GM12878 (cell line): ENCODE measurements at regions of chr1 and their contacts with region 1.

Region 1: GRCh38 chr1:41678111-41678878 is 193.8 kb upstream of the EDN2 start:
- DNase-seq: no peak
- ATAC-seq: peak; percentile 82
- H3K4me3 ChIP-seq: no peak overlapping the region
- H3K27ac ChIP-seq: peak overlapping the region; percentile 40; the same call in 1 of the 2 replicates
- H3K4me1 ChIP-seq: peaks cover 43% of the 10 kb centered on the region
- H3K27me3 ChIP-seq: no peaks in the 10 kb centered on the region
- CTCF ChIP-seq: no peak
- EP300 ChIP-seq: no peak
- POLR2A ChIP-seq: 0 out of 2 replicates have a peak, but pooled peaks have one; percentile 24
- RAD21 ChIP-seq: no peak

Region 2: DNA sequence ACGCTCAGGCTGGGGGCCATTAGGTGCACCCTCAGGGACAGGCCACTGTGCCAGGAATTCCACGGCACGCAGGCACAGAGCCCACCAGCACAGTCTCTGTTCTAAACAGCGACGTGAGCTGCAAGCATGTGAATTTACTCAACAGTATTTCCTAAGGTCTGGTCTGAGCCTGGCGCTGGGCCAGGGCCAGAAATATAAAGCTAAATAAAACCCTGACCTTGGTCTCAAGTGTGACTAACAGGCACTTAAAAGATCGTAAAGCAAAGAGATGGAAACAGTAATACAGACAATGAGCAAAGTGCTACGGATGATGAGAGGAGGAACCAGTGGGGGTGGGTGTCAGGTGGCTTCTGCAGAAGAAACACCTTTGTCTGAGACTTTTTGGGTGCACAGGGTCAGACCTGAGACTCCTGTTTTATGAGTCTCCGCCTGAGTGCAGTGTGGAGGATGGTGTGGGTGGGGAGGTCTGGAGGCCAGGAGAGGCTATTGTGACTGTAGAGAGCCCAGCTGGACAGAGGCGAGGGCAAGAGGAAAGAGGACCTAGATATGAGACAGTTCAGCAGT is 140.4 kb before region 1 on chr1:
- CTCF ChIA-PET with region 1: no interaction called
- POLR2A ChIA-PET with region 1: no interaction called
- RAD21 ChIA-PET with region 1: no interaction called
- SMC1A ChIA-PET with region 1: no interaction called
- in situ Hi-C with region 1: no loop called
- intact Hi-C with region 1: no loop called
- DNase-seq: no peak
- ATAC-seq: no peak
- H3K4me3 ChIP-seq: no peak overlapping the region
- H3K27ac ChIP-seq: no peak overlapping the region
- H3K4me1 ChIP-seq: peaks cover 3% of the 10 kb centered on the region; the same call in 1 of the 2 replicates
- H3K27me3 ChIP-seq: no peaks in the 10 kb centered on the region
- CTCF ChIP-seq: no peak
- EP300 ChIP-seq: no peak
- POLR2A ChIP-seq: no peak
- RAD21 ChIP-seq: no peak

Region 3: DNA sequence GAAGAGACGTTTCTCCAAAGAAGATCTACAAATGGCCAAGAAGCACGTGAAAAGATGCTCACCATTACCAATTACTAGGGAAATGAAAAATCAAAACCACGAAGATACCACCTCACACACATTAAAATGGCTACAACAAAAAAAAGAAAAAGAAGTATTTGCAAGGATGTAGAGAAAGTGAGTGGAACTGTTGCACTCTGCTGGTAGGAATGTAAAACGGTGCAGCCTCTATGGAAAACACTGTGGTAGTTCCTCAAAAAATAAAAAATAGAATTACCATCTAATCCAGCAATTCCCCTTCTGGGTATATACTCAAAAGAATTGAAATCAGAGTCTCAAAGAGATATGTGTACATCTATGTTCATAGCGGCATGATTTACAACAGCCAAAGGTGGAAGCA is 78.4 kb before region 1 on chr1:
- CTCF ChIA-PET with region 1: no interaction called
- POLR2A ChIA-PET with region 1: no interaction called
- RAD21 ChIA-PET with region 1: no interaction called
- SMC1A ChIA-PET with region 1: no interaction called
- in situ Hi-C with region 1: no loop called
- intact Hi-C with region 1: no loop called
- DNase-seq: no peak
- ATAC-seq: no peak
- H3K4me3 ChIP-seq: no peak overlapping the region
- H3K27ac ChIP-seq: no peak overlapping the region
- H3K4me1 ChIP-seq: no peaks in the 10 kb centered on the region
- H3K27me3 ChIP-seq: no peaks in the 10 kb centered on the region
- CTCF ChIP-seq: no peak
- EP300 ChIP-seq: no peak
- POLR2A ChIP-seq: no peak
- RAD21 ChIP-seq: no peak

Region 4: DNA sequence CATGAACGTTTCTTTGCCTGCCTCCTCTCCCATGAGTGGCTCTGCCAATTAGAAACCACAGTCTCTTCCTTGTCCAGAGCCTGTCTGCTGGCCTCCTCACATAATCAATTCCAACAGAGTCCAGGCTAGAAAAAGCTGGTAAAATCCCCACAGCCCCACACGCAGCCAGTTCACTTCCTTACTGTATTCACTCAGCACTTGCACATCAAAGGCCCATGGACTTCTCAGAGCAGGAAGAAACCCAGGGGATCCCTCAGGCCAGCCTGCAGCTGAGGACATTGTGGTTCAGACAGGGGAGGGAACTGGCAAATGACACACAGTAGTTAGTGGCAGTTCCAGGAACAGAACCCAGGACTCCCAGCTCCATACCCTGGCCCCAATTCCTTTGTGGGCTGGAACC is 22.2 kb before region 1 on chr1:
- CTCF ChIA-PET with region 1: interaction called, 14 read pairs
- POLR2A ChIA-PET with region 1: interaction called, 37 read pairs
- RAD21 ChIA-PET with region 1: interaction called, 35 read pairs
- SMC1A ChIA-PET with region 1: interaction called, 32 read pairs
- in situ Hi-C with region 1: no loop called
- intact Hi-C with region 1: no loop called
- DNase-seq: no peak
- ATAC-seq: peak; percentile 42
- H3K4me3 ChIP-seq: no peak overlapping the region
- H3K27ac ChIP-seq: no peak overlapping the region
- H3K4me1 ChIP-seq: peaks cover 16% of the 10 kb centered on the region
- H3K27me3 ChIP-seq: no peaks in the 10 kb centered on the region
- CTCF ChIP-seq: no peak
- EP300 ChIP-seq: no peak
- POLR2A ChIP-seq: no peak
- RAD21 ChIP-seq: no peak

Region 5: GRCh38 chr1:41689558-41689981 is 11.3 kb after region 1 on chr1:
- CTCF ChIA-PET with region 1: interaction called, 7 read pairs
- POLR2A ChIA-PET with region 1: interaction called, 17 read pairs
- RAD21 ChIA-PET with region 1: interaction called, 15 read pairs
- SMC1A ChIA-PET with region 1: interaction called, 19 read pairs
- in situ Hi-C with region 1: no loop called
- intact Hi-C with region 1: no loop called
- DNase-seq: no peak
- ATAC-seq: no peak
- H3K4me3 ChIP-seq: no peak overlapping the region
- H3K27ac ChIP-seq: no peak overlapping the region
- H3K4me1 ChIP-seq: peaks cover 20% of the 10 kb centered on the region
- H3K27me3 ChIP-seq: no peaks in the 10 kb centered on the region
- CTCF ChIP-seq: no peak
- EP300 ChIP-seq: no peak
- POLR2A ChIP-seq: no peak
- RAD21 ChIP-seq: no peak

Region 6: GRCh38 chr1:41704196-41704595 is 25.9 kb after region 1 on chr1:
- CTCF ChIA-PET with region 1: interaction called, 11 read pairs
- POLR2A ChIA-PET with region 1: interaction called, 21 read pairs
- RAD21 ChIA-PET with region 1: interaction called, 31 read pairs
- SMC1A ChIA-PET with region 1: interaction called, 34 read pairs
- in situ Hi-C with region 1: no loop called
- intact Hi-C with region 1: no loop called
- DNase-seq: no peak
- ATAC-seq: no peak
- H3K4me3 ChIP-seq: no peak overlapping the region
- H3K27ac ChIP-seq: no peak overlapping the region
- H3K4me1 ChIP-seq: peaks cover 24% of the 10 kb centered on the region
- H3K27me3 ChIP-seq: no peaks in the 10 kb centered on the region
- CTCF ChIP-seq: no peak
- EP300 ChIP-seq: no peak
- POLR2A ChIP-seq: no peak
- RAD21 ChIP-seq: no peak

Region 7: GRCh38 chr1:41720861-41721410 is 42.6 kb after region 1 on chr1:
- CTCF ChIA-PET with region 1: interaction called, 3 read pairs
- POLR2A ChIA-PET with region 1: interaction called, 9 read pairs
- RAD21 ChIA-PET with region 1: interaction called, 11 read pairs
- SMC1A ChIA-PET with region 1: interaction called, 16 read pairs
- in situ Hi-C with region 1: no loop called
- intact Hi-C with region 1: no loop called
- DNase-seq: no peak
- ATAC-seq: peak; percentile 80
- H3K4me3 ChIP-seq: no peak overlapping the region
- H3K27ac ChIP-seq: peak overlapping the region; percentile 21; the same call in 1 of the 2 replicates
- H3K4me1 ChIP-seq: peaks cover 69% of the 10 kb centered on the region
- H3K27me3 ChIP-seq: no peaks in the 10 kb centered on the region
- CTCF ChIP-seq: no peak
- EP300 ChIP-seq: no peak
- POLR2A ChIP-seq: no peak
- RAD21 ChIP-seq: no peak

Region 8: GRCh38 chr1:41783189-41783639 is 104.9 kb after region 1 on chr1:
- CTCF ChIA-PET with region 1: no interaction called
- POLR2A ChIA-PET with region 1: no interaction called
- RAD21 ChIA-PET with region 1: no interaction called
- SMC1A ChIA-PET with region 1: no interaction called
- in situ Hi-C with region 1: no loop called
- intact Hi-C with region 1: no loop called
- DNase-seq: no peak
- ATAC-seq: no peak
- H3K4me3 ChIP-seq: no peak overlapping the region
- H3K27ac ChIP-seq: no peak overlapping the region
- H3K4me1 ChIP-seq: no peaks in the 10 kb centered on the region
- H3K27me3 ChIP-seq: no peaks in the 10 kb centered on the region
- CTCF ChIP-seq: no peak
- EP300 ChIP-seq: no peak
- POLR2A ChIP-seq: no peak
- RAD21 ChIP-seq: no peak